Activated naive CD4-positive, alpha-beta T cell treated with anti-CD3 and anti-CD28 coated beads for 36 hours (primary cell): ENCODE measurements at regions of chr2 and their contacts with region 1.

Region 1: GRCh38 chr2:202703091-202703490 is 68.3 kb downstream of the FAM117B start:
- DNase-seq: no peak
- H3K4me3 Mint-ChIP-seq: no peak overlapping the region
- H3K27ac Mint-ChIP-seq: peak overlapping the region; percentile 71
- H3K4me1 Mint-ChIP-seq: peaks cover 70% of the 10 kb centered on the region
- H3K27me3 Mint-ChIP-seq: no peaks in the 10 kb centered on the region

Region 2: DNA sequence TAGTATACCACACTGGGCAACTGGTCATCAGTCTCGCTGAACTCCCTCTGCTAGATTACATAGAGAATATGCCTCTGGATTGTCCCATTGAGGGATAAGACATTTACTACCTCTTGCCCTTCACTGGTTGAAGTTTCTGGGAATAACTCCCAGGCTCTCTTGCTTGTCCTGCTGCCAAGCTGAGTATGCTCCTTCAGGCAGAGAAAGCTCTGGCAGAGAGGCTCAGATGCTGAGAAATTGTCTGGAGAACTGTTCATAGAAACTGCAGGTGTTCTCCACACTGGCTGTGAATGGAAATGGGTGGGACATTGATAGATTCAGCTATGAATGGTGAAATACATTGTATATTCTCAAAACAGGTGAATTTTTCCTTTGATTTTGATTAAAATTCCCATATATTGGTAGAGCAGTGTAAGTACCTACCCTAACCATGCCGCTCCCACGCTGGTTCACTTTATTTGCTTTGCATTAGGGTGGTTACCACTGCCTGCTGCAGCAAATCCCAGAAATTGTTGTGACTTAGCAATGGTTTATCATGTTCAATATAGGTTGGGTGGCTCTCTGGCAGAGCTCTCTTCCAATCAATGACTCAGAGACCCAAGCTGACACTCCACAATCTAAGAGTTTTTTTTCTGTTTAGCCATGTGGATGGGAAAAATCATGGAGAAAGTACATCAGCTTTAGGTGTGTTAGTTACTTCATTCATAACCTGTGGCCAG is 31.6 kb before region 1 on chr2:
- CTCF ChIA-PET with region 1: interaction called, 3 read pairs
- intact Hi-C with region 1: loop called (anchors 2 kb)
- DNase-seq: no peak
- H3K4me3 Mint-ChIP-seq: no peak overlapping the region
- H3K27ac Mint-ChIP-seq: no peak overlapping the region
- H3K4me1 Mint-ChIP-seq: peaks cover 80% of the 10 kb centered on the region
- H3K27me3 Mint-ChIP-seq: no peaks in the 10 kb centered on the region

Region 3: GRCh38 chr2:202750763-202751427 is 47.8 kb after region 1 on chr2:
- CTCF ChIA-PET with region 1: no interaction called
- intact Hi-C with region 1: loop called (anchors 1 kb)
- DNase-seq: no peak
- H3K4me3 Mint-ChIP-seq: peak overlapping the region; percentile 48
- H3K27ac Mint-ChIP-seq: peak overlapping the region; percentile 97
- H3K4me1 Mint-ChIP-seq: peaks cover 67% of the 10 kb centered on the region
- H3K27me3 Mint-ChIP-seq: no peaks in the 10 kb centered on the region

Region 4: GRCh38 chr2:202780514-202781021 is 77.5 kb after region 1 on chr2:
- CTCF ChIA-PET with region 1: no interaction called
- intact Hi-C with region 1: loop called (anchors 1 kb)
- DNase-seq: peak; percentile 18
- H3K4me3 Mint-ChIP-seq: no peak overlapping the region
- H3K27ac Mint-ChIP-seq: no peak overlapping the region
- H3K4me1 Mint-ChIP-seq: peaks cover 15% of the 10 kb centered on the region
- H3K27me3 Mint-ChIP-seq: no peaks in the 10 kb centered on the region

Region 5: DNA sequence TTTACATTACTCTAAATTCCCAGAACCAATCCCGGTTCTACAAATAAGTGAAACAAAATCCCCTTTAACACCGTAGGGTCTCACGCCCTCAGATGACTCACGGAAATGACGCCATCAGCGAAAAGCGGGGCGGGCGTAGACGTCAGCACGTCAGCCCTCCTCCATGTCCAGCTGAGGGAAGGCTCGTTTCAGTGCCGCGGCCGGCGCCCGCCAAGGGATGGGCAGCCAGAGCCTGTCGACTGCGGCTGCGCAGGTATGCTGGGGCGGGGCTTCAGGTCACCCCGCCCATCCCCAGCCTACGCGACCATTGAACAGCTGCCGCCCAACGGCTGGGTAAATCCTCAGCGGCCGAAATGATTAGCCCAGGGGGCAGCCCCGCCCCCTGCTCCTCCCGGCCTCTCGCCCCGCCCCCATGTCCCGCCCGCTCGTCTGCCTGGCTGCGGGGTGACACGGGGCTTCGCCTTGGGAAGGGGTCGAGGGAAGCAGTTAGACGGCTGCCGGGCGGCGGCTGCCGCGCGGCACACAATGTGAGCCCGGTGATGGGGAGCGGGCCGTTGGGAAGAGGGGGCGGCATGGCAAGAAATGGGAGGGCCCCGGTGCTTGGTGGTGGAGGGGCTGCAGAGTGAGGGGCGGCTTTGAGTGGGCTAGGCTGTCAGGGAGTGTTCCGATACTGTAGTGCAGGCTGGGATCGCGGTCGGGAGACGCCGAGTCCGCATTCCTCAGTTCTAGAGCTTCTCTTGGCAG is 311.5 kb after region 1 on chr2 and contains the start of gene NBEAL1:
- CTCF ChIA-PET with region 1: no interaction called
- intact Hi-C with region 1: loop called (anchors 10 kb)
- DNase-seq: peak; percentile 97
- H3K4me3 Mint-ChIP-seq: peak within 1 kb of the TSS; percentile 95
- H3K27ac Mint-ChIP-seq: peak within 1 kb of the TSS; percentile 74
- H3K4me1 Mint-ChIP-seq: peaks cover 27% of the 10 kb centered on the region
- H3K27me3 Mint-ChIP-seq: no peaks in the 10 kb centered on the region
- total RNA-seq, gene NBEAL1: 7.9 to 8.3 TPM